Aorta (tissue), 5 donors: ENCODE measurements at regions of chr10 and their contacts with region 1.

Region 1: DNA sequence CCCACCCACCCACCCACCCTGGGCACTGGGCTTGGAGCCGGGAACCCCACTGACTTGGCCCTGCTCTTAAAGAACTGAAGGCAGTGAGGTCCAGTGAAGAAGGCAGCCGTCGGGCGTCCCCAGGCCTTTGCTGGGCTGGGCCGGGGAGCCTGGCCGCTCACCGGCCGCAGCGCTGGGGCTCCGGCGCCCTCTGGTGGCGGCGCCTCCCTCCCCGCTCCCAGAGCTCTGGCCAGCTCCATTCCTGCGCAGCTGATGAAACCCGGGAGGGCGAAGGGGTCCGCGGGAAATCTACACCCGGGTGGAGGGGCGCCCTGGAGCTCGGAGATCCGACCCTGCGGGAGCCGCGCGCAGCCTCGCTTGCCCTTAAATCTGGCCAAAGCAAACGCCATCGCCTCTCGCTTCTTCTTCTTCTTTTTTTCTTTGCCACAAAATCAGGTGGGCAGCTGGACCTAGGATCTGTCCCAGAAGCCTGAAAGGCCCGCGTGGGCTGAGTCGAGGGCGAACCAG is 1.7 kb upstream of the CXCL12 start:
- DNase-seq: peak; percentile 74 to 90
- ATAC-seq: peak; percentile 90
- H3K4me3 ChIP-seq: no peak overlapping the region
- H3K27ac ChIP-seq: no peak overlapping the region
- H3K4me1 ChIP-seq: no peaks in the 10 kb centered on the region
- H3K27me3 ChIP-seq: no peaks in the 10 kb centered on the region

Region 2: DNA sequence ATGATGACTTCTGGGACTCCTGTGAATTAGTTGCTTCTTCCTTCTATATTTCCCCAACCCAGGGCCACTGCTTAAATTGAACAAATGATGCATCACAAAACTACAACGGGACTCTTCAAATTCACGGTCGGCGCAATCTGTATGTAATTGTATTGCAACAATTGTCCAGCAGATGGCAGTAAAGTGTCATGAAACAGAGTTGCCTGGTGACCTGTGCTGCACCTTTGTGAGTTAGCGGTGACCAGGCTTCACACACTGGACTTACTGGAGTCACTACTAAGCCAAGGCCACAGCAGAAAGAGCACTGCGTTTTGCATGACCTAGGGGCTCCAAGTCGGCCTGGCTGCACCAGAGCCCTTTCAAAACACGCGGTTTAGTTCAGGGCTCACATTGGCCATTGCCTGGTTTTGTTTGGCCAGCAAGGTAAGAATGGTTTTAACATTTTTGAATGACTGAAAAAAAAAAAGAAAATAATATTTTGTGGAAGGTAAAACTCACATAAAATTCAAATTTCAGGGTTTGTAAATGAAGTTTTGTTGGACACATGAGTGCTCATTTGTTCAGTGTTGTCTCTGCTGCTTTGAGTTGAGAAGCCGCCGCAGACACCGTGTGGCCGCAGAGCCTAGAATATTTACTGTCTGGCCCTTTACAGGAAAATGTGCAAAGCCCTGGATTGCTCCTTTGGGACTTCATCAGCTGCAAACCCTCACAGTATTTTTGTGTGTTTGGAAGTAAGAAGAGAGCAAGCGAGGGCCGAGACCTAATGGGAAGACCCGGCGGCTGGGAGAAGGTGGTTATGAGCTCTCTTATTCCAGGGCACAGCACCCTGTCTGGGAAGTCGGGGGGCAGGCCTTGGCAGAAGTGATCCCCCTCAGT is 714.7 kb before region 1 on chr10:
- intact Hi-C with region 1: loop called (anchors 2 kb)
- DNase-seq: no peak
- ATAC-seq: peak; percentile 69
- H3K4me3 ChIP-seq: no peak overlapping the region
- H3K27ac ChIP-seq: no peak overlapping the region
- H3K4me1 ChIP-seq: no peaks in the 10 kb centered on the region
- H3K27me3 ChIP-seq: peaks cover 0 to 2% of the 10 kb centered on the region in 2 donors

Region 3: GRCh38 chr10:44071479-44071878 is 315.1 kb before region 1 on chr10:
- intact Hi-C with region 1: loop called in 1 of 2 experiments (anchors 10 kb)
- DNase-seq: no peak
- ATAC-seq: no peak
- H3K4me3 ChIP-seq: no peak overlapping the region
- H3K27ac ChIP-seq: peak overlapping the region in 1 of 2 donors; percentile 76
- H3K4me1 ChIP-seq: no peaks in the 10 kb centered on the region
- H3K27me3 ChIP-seq: no peaks in the 10 kb centered on the region

Region 4: GRCh38 chr10:44195112-44196007 is 191.2 kb before region 1 on chr10:
- intact Hi-C with region 1: no loop called
- DNase-seq: peak; percentile 87 to 90
- ATAC-seq: peak; percentile 82
- H3K4me3 ChIP-seq: no peak overlapping the region
- H3K27ac ChIP-seq: peak overlapping the region in 1 of 2 donors; percentile 32
- H3K4me1 ChIP-seq: no peaks in the 10 kb centered on the region
- H3K27me3 ChIP-seq: no peaks in the 10 kb centered on the region

Region 5: GRCh38 chr10:44857363-44858016 is 470.9 kb after region 1 on chr10:
- intact Hi-C with region 1: loop called (anchors 2 to 5 kb)
- DNase-seq: peak; percentile 75 to 85
- ATAC-seq: peak; percentile 81
- H3K4me3 ChIP-seq: no peak overlapping the region
- H3K27ac ChIP-seq: no peak overlapping the region
- H3K4me1 ChIP-seq: no peaks in the 10 kb centered on the region
- H3K27me3 ChIP-seq: no peaks in the 10 kb centered on the region